Heart left ventricle (tissue), 16 donors: ENCODE measurements at regions of chr6 and their contacts with region 1.

Region 1: GRCh38 chr6:79466207-79466834 is 70.9 kb downstream of the LCA5 start:
- DNase-seq: no peak
- ATAC-seq: no peak
- H3K4me3 ChIP-seq: no peak overlapping the region
- H3K27ac ChIP-seq: no peak overlapping the region
- H3K4me1 ChIP-seq: peaks cover 0 to 8% (median 0%) of the 10 kb centered on the region in 12 donors
- H3K27me3 ChIP-seq: no peaks in the 10 kb centered on the region
- CTCF ChIP-seq: peak in 11 of 12 donors; percentile 41 to 69 (median 58)
- POLR2A ChIP-seq: no peak

Region 2: DNA sequence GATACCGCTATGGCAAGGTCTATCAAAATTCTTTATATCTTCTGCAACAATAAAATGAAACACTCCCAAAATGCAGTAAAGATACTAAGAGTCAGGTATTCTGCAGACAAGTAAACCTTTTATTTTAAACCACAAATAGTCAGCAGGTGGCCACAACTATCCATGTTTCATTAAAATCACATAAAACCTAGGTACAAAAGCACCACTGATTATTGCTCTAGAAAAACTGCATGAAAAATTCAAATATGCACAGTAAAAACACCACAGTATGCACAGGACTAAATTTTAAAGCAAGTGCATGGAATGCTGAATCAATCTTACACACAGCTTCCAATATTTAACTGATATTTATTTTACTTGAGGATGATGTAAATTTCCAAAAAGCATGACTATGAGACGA is 265.2 kb before region 1 on chr6:
- intact Hi-C with region 1: loop called in 1 of 10 experiments (anchors 10 kb)
- DNase-seq: no peak
- ATAC-seq: no peak
- H3K4me3 ChIP-seq: no peak overlapping the region
- H3K27ac ChIP-seq: no peak overlapping the region
- H3K4me1 ChIP-seq: peaks cover 0 to 11% (median 0%) of the 10 kb centered on the region in 12 donors
- H3K27me3 ChIP-seq: no peaks in the 10 kb centered on the region
- CTCF ChIP-seq: no peak
- POLR2A ChIP-seq: no peak

Region 3: GRCh38 chr6:79313254-79314012 is 152.9 kb before region 1 on chr6:
- intact Hi-C with region 1: loop called in 1 of 10 experiments (anchors 10 kb)
- DNase-seq: no peak
- ATAC-seq: no peak
- H3K4me3 ChIP-seq: no peak overlapping the region
- H3K27ac ChIP-seq: no peak overlapping the region
- H3K4me1 ChIP-seq: no peaks in the 10 kb centered on the region
- H3K27me3 ChIP-seq: no peaks in the 10 kb centered on the region
- CTCF ChIP-seq: no peak
- POLR2A ChIP-seq: no peak

Region 4: GRCh38 chr6:79506251-79506650 is 39.9 kb after region 1 on chr6:
- intact Hi-C with region 1: no loop called
- DNase-seq: no peak
- ATAC-seq: no peak
- H3K4me3 ChIP-seq: no peak overlapping the region
- H3K27ac ChIP-seq: no peak overlapping the region
- H3K4me1 ChIP-seq: no peaks in the 10 kb centered on the region
- H3K27me3 ChIP-seq: no peaks in the 10 kb centered on the region
- CTCF ChIP-seq: no peak
- POLR2A ChIP-seq: no peak